ENCODE measurements at regions of chr1 and their contacts with region 1.

Region 1: DNA sequence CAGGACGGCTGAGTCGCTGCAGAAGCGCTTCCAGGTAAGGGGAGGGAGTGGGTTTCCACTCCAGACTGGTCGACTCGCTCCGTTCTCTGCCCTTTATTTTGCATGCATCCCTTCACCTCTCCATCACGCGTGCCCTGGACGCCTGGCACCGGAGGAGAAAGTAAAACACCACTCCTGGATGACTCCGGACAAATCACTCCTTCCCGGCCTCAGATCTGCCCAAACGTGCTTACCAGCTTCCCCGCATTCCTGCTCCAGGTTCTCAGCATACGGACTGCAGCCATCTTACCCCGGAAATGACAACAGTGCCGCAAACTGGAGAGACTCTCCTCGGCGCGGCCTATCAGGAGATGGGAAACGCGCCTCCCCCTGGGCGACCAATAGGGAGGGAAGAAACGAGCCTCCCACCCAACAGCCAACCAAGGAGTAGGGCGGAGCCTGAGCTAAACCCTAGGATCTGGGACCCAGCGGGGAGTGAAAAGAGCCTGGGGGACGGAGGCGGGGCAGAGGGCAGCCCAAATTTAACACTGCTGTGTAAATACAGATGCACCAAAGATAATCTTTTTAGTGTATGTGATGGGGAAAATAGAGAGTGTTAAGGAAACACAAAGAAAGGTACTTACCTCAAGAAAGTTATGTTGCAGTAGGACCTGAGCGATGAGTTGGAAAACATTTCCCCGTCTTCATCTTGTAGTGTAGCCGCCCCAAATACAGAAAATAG is at the start of gene DBT:
- DNase-seq: peak; percentile 99
- H3K4me3 ChIP-seq: peak within 1 kb of the TSS; percentile 81 to 91 (median 88)
- H3K27ac ChIP-seq: peak within 1 kb of the TSS; percentile 87 to 94 (median 93)
- H3K4me1 ChIP-seq: peaks cover 0 to 16% (median 8%) of the 10 kb centered on the region in 4 donors
- H3K27me3 ChIP-seq: no peaks in the 10 kb centered on the region
- CTCF ChIP-seq: no peak
- EP300 ChIP-seq: no peak
- POLR2A ChIP-seq: peak; percentile 80 to 84
- total RNA-seq, gene DBT: 8.8 to 14.3 (median 11.1) TPM

Region 2: DNA sequence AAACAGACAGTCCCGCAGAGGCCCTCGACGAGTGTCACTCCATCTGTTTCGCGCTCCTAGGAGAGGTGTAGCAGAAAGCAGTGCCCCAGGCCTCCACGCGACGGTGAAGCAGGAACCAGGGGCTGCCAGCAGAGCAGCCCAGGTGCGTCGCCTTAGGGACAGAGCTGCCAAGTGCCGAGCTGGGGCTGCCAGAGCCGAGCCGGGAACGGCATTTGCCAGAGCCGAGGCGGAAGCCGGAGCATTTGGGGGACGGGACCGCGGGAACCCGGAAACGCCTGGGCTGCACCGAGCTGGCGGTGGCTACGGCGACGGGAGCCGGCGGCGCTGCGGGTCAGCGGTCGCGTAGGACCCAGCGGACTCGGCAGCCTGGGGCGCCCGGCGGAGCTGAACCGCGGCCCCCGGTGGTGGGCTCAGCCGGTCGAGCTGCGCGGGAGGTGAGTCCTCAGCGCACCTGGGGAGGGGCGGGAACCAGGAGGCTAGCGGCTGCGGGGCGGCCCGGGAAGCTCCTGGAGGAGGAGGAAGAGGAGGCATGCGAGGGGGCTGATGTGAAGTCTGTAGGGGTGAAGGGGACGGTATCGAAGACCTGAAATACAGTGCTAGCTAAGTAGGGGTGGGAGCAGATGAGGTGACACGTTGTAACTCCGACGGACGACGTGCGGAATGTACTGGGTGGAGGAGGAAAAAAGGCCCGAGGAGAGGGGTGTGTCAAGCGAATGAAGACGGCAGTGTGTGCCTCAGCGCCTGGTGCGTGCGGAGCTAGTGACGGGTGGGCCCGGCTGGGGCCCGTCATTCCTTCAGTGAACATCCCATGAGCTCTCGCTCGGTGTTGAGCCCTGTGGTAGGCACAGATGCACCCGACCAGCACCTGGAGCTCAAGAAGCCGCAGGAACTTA is 279.7 kb before region 1 on chr1 and contains the start of gene SLC35A3:
- intact Hi-C with region 1: loop called (anchors 2 kb)
- DNase-seq: peak; percentile 86
- H3K4me3 ChIP-seq: peak within 1 kb of the TSS; percentile 70 to 92 (median 88)
- H3K27ac ChIP-seq: peak within 1 kb of the TSS; percentile 72 to 79 (median 76)
- H3K4me1 ChIP-seq: peaks cover 0 to 26% (median 10%) of the 10 kb centered on the region in 4 donors
- H3K27me3 ChIP-seq: no peaks in the 10 kb centered on the region
- CTCF ChIP-seq: no peak
- EP300 ChIP-seq: no peak
- POLR2A ChIP-seq: peak; percentile 21 to 56
- total RNA-seq, gene SLC35A3: 20.2 to 23.9 (median 22.1) TPM

Region 3: GRCh38 chr1:100037927-100038659 is 211.6 kb before region 1 on chr1:
- intact Hi-C with region 1: loop called (anchors 5 kb)
- DNase-seq: peak; percentile 94
- H3K4me3 ChIP-seq: peak overlapping the region; percentile 76 to 91 (median 82)
- H3K27ac ChIP-seq: peak overlapping the region; percentile 96 to 99 (median 98)
- H3K4me1 ChIP-seq: peaks cover 0 to 44% (median 43%) of the 10 kb centered on the region in 4 donors
- H3K27me3 ChIP-seq: no peaks in the 10 kb centered on the region
- CTCF ChIP-seq: no peak
- EP300 ChIP-seq: peak in 1 of 4 donors; percentile 4
- POLR2A ChIP-seq: peak; percentile 87 to 90

Region 4: DNA sequence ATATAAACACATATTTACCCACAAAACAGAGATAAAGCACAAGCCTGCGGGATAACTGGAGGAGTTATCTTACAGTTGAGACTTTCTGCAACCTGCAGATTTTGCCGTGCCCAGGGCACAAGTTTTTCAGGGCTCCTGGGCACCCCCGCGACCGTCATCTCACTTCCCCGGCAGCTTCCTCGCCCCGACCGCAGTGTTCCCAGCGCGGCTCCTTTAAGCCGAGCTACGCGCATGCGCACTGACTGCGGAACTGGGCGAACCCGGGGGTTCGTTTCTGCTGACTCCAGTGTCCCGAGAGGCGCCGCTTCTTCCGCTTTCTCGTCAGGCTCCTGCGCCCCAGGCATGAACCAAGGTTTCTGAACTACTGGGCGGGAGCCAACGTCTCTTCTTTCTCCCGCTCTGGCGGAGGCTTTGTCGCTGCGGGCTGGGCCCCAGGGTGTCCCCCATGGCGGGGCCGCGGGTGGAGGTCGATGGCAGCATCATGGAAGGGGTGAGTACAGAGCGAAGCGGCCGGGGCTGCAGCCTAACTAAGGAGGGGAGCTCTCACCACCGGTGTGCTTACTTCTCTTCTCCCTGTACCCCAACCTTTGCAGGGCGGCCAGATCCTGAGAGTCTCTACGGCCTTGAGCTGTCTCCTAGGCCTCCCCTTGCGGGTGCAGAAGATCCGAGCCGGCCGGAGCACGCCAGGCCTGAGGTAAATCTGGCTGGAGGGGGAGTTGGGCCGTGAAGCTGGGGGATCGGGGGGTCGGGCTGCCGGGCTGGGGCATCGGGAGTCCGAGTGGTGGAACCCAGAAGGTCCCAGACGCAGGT is 16.4 kb after region 1 on chr1 and contains the start of gene RTCA:
- intact Hi-C with region 1: no loop called
- DNase-seq: peak; percentile 98
- H3K4me3 ChIP-seq: peak within 1 kb of the TSS; percentile 70 to 83 (median 75)
- H3K27ac ChIP-seq: peak within 1 kb of the TSS; percentile 82 to 87 (median 84)
- H3K4me1 ChIP-seq: peaks cover 0 to 44% (median 23%) of the 10 kb centered on the region in 4 donors
- H3K27me3 ChIP-seq: no peaks in the 10 kb centered on the region
- CTCF ChIP-seq: no peak
- EP300 ChIP-seq: no peak
- POLR2A ChIP-seq: peak; percentile 38 to 44
- total RNA-seq, gene RTCA: 16.3 to 24.3 (median 19.8) TPM

Region 5: DNA sequence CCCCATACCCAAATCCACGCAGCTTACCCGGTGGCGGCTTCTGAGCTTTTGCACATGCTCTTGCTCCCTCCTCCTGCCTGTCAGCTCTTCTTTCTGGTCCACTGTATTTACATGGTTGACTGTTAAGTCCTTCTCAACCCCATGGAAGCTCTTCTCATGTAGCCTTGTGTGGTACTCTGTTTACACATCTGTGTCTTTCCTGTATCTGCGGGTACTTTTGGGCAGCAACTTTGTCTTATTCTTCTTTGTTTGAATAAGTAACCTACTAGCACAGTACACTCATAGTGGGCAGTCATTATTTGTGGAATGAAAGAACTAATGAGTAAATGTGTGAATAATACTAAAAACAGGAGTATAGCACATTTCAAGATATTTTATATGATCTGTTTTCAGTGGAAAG is 199.8 kb after region 1 on chr1:
- intact Hi-C with region 1: no loop called
- DNase-seq: no peak
- H3K4me3 ChIP-seq: no peak overlapping the region
- H3K27ac ChIP-seq: no peak overlapping the region
- H3K4me1 ChIP-seq: peaks cover 0 to 5% (median 2%) of the 10 kb centered on the region in 4 donors
- H3K27me3 ChIP-seq: no peaks in the 10 kb centered on the region
- CTCF ChIP-seq: no peak
- EP300 ChIP-seq: no peak
- POLR2A ChIP-seq: no peak

Region 6: GRCh38 chr1:100459358-100460114 is 209.8 kb after region 1 on chr1:
- intact Hi-C with region 1: loop called (anchors 5 kb)
- DNase-seq: peak; percentile 86
- H3K4me3 ChIP-seq: no peak overlapping the region
- H3K27ac ChIP-seq: peak overlapping the region; percentile 18 to 73 (median 60)
- H3K4me1 ChIP-seq: peaks cover 0 to 13% (median 8%) of the 10 kb centered on the region in 4 donors
- H3K27me3 ChIP-seq: no peaks in the 10 kb centered on the region
- CTCF ChIP-seq: peak; percentile 84 to 87 (median 86)
- EP300 ChIP-seq: no peak
- POLR2A ChIP-seq: no peak

Region 7: DNA sequence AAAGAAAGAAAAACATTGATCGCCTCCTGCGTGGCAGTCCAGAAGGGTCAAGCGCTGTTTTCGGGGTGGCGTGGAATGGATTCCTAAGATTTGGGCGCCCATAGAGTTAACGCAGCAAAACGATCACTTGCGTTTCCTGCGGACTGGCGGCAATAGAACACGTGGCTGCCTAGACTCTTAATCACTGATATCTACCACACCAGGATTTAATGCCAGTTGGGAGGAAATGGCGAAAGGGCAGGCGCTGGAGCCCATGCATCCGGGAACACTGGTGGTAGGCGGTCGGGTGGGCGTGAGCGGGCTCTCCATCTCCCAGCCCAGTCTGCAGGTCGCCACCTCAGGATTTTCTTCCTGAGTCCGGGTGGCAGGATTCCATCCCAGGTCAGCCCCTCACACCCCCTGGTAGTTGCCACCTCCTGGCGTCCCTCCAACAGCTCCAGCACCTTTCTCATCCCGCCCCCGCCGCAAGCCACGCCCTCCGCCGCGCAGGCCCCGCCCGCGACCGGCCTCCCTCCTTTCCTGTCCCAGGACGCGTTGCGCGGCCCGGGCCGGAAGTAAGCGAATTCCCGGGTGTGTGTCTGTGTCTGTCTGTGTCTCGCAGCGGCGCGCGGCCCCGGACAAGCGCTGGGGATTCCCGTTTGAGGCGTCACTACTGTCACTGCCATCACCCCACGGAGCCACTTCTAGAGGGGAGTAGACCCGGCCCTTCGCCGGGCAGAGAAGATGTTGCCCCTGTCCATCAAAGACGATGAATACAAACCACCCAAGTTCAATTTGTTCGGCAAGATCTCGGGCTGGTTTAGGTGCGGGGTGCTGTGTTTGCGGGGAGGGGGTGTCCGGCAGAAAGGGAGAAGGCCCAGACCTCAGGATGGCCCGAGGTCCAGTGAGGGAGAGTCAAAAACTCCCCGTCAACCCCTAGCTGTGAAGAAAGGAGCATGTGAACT is 646.1 kb after region 1 on chr1 and contains the start of gene SLC30A7:
- intact Hi-C with region 1: loop called (anchors 10 kb)
- DNase-seq: peak; percentile 96
- H3K4me3 ChIP-seq: peak within 1 kb of the TSS; percentile 60 to 85 (median 72)
- H3K27ac ChIP-seq: peak within 1 kb of the TSS; percentile 89 to 97 (median 93)
- H3K4me1 ChIP-seq: peaks cover 0 to 31% (median 18%) of the 10 kb centered on the region in 4 donors
- H3K27me3 ChIP-seq: no peaks in the 10 kb centered on the region
- CTCF ChIP-seq: no peak
- EP300 ChIP-seq: no peak
- POLR2A ChIP-seq: peak; percentile 38 to 63
- total RNA-seq, gene SLC30A7: 10.9 to 16.7 (median 14.1) TPM

Measured in sigmoid colon (tissue), 7 donors.